ENCODE measurements at regions of chr7 and their contacts with region 1.

Region 1: DNA sequence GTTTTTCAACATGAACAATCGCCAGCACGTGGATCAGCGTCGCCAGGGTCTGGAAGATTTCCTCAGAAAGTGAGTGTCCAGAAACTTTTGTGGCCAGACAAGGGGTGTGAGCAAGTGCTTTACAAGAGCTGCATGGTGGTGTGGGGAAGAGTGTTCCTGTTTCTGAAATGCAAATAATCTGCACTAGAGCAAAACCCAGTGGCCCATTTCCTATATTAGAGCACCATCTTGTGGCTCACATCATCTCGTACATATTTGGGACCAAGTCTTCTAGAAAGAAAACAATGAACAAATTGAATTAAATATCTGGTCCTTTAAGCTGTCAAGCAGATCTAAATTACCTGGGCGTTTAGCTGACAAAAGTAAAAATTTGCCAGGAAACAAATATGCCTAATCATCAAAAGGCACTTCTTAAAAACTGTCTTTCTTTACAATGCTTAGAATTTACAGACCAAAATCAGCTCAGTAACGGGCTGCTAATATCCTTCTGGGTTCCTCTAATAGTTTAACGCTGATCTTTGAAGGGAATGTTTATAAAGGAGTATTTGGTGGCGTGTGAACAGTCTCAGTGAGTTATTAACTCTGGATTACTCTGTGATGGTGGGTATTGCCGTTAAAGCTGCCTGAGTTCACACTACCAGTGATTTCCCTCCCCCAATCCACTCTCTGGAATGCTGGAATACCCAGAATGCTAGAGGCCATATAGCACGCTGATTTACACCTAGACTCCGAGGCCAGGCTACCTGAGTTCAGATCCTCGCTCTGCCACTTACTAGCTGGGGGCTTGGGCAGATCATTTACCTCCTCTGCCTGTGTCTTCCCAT is 73.6 kb downstream of the SNX10 start:
- DNase-seq: peak; percentile 55
- H3K4me3 ChIP-seq: no peak overlapping the region
- H3K27ac ChIP-seq: no peak overlapping the region
- H3K4me1 ChIP-seq: no peaks in the 10 kb centered on the region
- H3K27me3 ChIP-seq: no peaks in the 10 kb centered on the region
- CTCF ChIP-seq: peak; percentile 61 to 81 (median 71)
- POLR2A ChIP-seq: no peak

Region 2: GRCh38 chr7:25894902-25895791 is 470.1 kb before region 1 on chr7:
- intact Hi-C with region 1: loop called (anchors 10 kb)
- DNase-seq: peak; percentile 82
- H3K4me3 ChIP-seq: peak overlapping the region; percentile 5 to 26
- H3K27ac ChIP-seq: no peak overlapping the region
- H3K4me1 ChIP-seq: peaks cover 11% of the 10 kb centered on the region
- H3K27me3 ChIP-seq: no peaks in the 10 kb centered on the region
- CTCF ChIP-seq: peak; percentile 41 to 63 (median 55)
- POLR2A ChIP-seq: no peak

Region 3: DNA sequence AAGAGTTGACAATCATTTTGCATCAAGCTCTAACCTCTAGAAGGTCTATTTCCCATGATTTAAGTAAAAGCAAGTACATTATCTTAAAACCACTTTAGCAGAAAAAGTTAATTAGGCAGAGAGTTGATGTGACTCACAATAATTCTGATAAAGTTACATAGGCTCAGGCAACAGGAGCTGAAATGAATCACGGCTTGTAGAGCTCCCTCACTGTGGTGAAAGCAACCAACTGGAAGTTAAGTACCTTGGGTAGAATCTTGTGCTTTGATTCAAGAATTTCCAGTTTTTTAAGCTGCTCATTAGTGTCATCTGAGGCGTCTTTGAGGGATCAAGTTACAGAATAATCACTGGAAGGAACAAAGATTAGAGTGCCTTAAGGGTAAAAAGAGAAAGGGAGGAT is 282.2 kb before region 1 on chr7:
- intact Hi-C with region 1: loop called (anchors 10 kb)
- DNase-seq: no peak
- H3K4me3 ChIP-seq: no peak overlapping the region
- H3K27ac ChIP-seq: no peak overlapping the region
- H3K4me1 ChIP-seq: peaks cover 4% of the 10 kb centered on the region
- H3K27me3 ChIP-seq: no peaks in the 10 kb centered on the region
- CTCF ChIP-seq: no peak
- POLR2A ChIP-seq: no peak

Region 4: GRCh38 chr7:26439521-26440232 is 74.4 kb after region 1 on chr7:
- intact Hi-C with region 1: no loop called
- DNase-seq: no peak
- H3K4me3 ChIP-seq: no peak overlapping the region
- H3K27ac ChIP-seq: no peak overlapping the region
- H3K4me1 ChIP-seq: peaks cover 4% of the 10 kb centered on the region
- H3K27me3 ChIP-seq: no peaks in the 10 kb centered on the region
- CTCF ChIP-seq: no peak
- POLR2A ChIP-seq: no peak

Region 5: GRCh38 chr7:26686448-26686981 is 321.2 kb after region 1 on chr7:
- intact Hi-C with region 1: no loop called
- DNase-seq: no peak
- H3K4me3 ChIP-seq: no peak overlapping the region
- H3K27ac ChIP-seq: no peak overlapping the region
- H3K4me1 ChIP-seq: no peaks in the 10 kb centered on the region
- H3K27me3 ChIP-seq: no peaks in the 10 kb centered on the region
- CTCF ChIP-seq: peak; percentile 32 to 81 (median 32)
- POLR2A ChIP-seq: no peak

Region 6: GRCh38 chr7:26843705-26844104 is 478.4 kb after region 1 on chr7:
- intact Hi-C with region 1: no loop called
- DNase-seq: no peak
- H3K4me3 ChIP-seq: no peak overlapping the region
- H3K27ac ChIP-seq: no peak overlapping the region
- H3K4me1 ChIP-seq: no peaks in the 10 kb centered on the region
- H3K27me3 ChIP-seq: no peaks in the 10 kb centered on the region
- CTCF ChIP-seq: no peak
- POLR2A ChIP-seq: no peak

Measured in testis (tissue), 5 donors.